Activated CD4-positive, alpha-beta memory T cell treated with anti-CD3 and anti-CD28 coated beads for 36 hours (primary cell): ENCODE measurements at regions of chr5 and their contacts with region 1.

Region 1: GRCh38 chr5:148826053-148826738 is at the start of gene ADRB2:
- DNase-seq: peak; percentile 93
- H3K4me3 Mint-ChIP-seq: peak within 1 kb of the TSS; percentile 80
- H3K27ac Mint-ChIP-seq: peak within 1 kb of the TSS; percentile 46
- H3K4me1 Mint-ChIP-seq: peaks cover 35% of the 10 kb centered on the region
- H3K27me3 Mint-ChIP-seq: peaks cover 7% of the 10 kb centered on the region
- total RNA-seq, gene ADRB2: 0.36 to 0.52 TPM

Region 2: GRCh38 chr5:148780711-148781110 is 45.5 kb before region 1 on chr5:
- CTCF ChIA-PET with region 1: no interaction called
- POLR2A ChIA-PET with region 1: no interaction called
- intact Hi-C with region 1: no loop called
- DNase-seq: no peak
- H3K4me3 Mint-ChIP-seq: no peak overlapping the region
- H3K27ac Mint-ChIP-seq: no peak overlapping the region
- H3K4me1 Mint-ChIP-seq: peaks cover 3% of the 10 kb centered on the region
- H3K27me3 Mint-ChIP-seq: peaks cover 19% of the 10 kb centered on the region

Region 3: DNA sequence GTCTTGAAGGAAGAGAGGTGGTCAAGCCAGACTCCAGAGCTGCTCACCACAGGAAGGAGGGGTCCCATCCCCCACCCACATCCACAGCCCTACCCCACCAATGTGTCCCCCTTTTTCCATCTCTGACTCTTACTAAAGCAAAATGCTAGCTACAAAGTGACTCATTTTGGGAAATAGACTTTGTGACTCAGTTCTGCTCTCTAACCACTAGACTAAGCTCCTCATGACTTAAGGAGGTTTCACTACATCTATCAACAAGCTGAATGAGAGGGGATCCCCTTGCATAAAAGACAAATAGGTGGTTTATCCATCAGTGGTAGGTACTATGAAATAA is 34.9 kb before region 1 on chr5:
- CTCF ChIA-PET with region 1: interaction called, 6 read pairs
- POLR2A ChIA-PET with region 1: no interaction called
- intact Hi-C with region 1: loop called (anchors 5 kb)
- DNase-seq: peak; percentile 77
- H3K4me3 Mint-ChIP-seq: no peak overlapping the region
- H3K27ac Mint-ChIP-seq: no peak overlapping the region
- H3K4me1 Mint-ChIP-seq: peaks cover 24% of the 10 kb centered on the region
- H3K27me3 Mint-ChIP-seq: peaks cover 33% of the 10 kb centered on the region

Region 4: GRCh38 chr5:148849461-148849860 is 23.3 kb after region 1 on chr5:
- CTCF ChIA-PET with region 1: interaction called, 8 read pairs
- POLR2A ChIA-PET with region 1: no interaction called
- intact Hi-C with region 1: loop called (anchors 1 kb)
- DNase-seq: peak; percentile 37
- H3K4me3 Mint-ChIP-seq: no peak overlapping the region
- H3K27ac Mint-ChIP-seq: peak overlapping the region; percentile 71
- H3K4me1 Mint-ChIP-seq: peaks cover 42% of the 10 kb centered on the region
- H3K27me3 Mint-ChIP-seq: no peaks in the 10 kb centered on the region

Region 5: DNA sequence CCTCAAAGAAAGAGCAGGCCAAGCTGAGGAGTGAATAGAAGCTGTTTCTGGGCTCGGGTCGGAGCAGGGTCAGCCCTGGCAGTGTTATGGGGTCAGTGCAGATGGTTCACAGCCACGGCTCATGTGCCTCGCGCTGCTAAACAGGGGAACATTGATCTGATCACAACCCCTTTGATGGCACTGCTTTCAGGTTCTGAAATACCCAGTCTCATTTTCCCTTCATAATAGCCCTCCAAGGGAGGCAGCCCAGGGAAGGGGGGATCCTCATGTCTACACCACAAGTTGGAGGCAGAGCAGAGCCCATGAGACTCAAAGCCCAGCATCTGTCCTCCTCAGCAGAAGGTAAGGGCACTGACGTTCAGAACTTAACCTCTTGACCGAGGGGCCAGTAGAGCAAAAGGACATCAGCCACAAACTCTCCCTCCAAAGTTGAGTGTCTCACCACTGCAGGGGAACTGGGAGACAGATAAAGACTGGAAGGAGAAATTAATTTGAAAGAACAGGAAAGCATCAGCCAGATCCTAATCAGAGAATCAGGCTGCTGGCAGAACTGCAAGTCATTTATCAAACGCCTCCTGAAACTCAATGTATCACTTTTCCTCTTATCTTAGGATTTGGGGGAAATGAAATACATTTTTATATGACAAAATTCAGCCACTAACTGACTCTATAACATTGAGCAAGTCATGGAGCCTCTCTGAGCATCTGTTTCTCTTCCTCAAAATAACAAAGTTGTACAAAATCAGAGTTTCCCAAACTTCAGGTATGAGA is 126.1 kb after region 1 on chr5:
- CTCF ChIA-PET with region 1: interaction called, 51 read pairs
- POLR2A ChIA-PET with region 1: no interaction called
- intact Hi-C with region 1: loop called (anchors 2 kb)
- DNase-seq: no peak
- H3K4me3 Mint-ChIP-seq: no peak overlapping the region
- H3K27ac Mint-ChIP-seq: no peak overlapping the region
- H3K4me1 Mint-ChIP-seq: no peaks in the 10 kb centered on the region
- H3K27me3 Mint-ChIP-seq: no peaks in the 10 kb centered on the region

Region 6: GRCh38 chr5:149268928-149269557 is 442.8 kb after region 1 on chr5:
- CTCF ChIA-PET with region 1: no interaction called
- POLR2A ChIA-PET with region 1: no interaction called
- intact Hi-C with region 1: loop called (anchors 10 kb)
- DNase-seq: no peak
- H3K4me3 Mint-ChIP-seq: no peak overlapping the region
- H3K27ac Mint-ChIP-seq: no peak overlapping the region
- H3K4me1 Mint-ChIP-seq: peaks cover 12% of the 10 kb centered on the region
- H3K27me3 Mint-ChIP-seq: peaks cover 23% of the 10 kb centered on the region